ENCODE measurements at regions of chr11 and their contacts with region 1.

Region 1: GRCh38 chr11:44104481-44105294 is 9.2 kb downstream of the EXT2 start:
- DNase-seq: no peak
- ATAC-seq: no peak
- H3K4me3 ChIP-seq: no peak overlapping the region
- H3K27ac ChIP-seq: no peak overlapping the region
- H3K4me1 ChIP-seq: peaks cover 2% of the 10 kb centered on the region
- H3K27me3 ChIP-seq: no peaks in the 10 kb centered on the region

Region 2: GRCh38 chr11:44530413-44531115 is 425.9 kb after region 1 on chr11:
- intact Hi-C with region 1: loop called in 2 of 4 experiments (anchors 5 to 10 kb)
- DNase-seq: no peak
- ATAC-seq: no peak
- H3K4me3 ChIP-seq: no peak overlapping the region
- H3K27ac ChIP-seq: no peak overlapping the region
- H3K4me1 ChIP-seq: no peaks in the 10 kb centered on the region
- H3K27me3 ChIP-seq: no peaks in the 10 kb centered on the region